ENCODE measurements at regions of chr10 and their contacts with region 1.

Region 1: DNA sequence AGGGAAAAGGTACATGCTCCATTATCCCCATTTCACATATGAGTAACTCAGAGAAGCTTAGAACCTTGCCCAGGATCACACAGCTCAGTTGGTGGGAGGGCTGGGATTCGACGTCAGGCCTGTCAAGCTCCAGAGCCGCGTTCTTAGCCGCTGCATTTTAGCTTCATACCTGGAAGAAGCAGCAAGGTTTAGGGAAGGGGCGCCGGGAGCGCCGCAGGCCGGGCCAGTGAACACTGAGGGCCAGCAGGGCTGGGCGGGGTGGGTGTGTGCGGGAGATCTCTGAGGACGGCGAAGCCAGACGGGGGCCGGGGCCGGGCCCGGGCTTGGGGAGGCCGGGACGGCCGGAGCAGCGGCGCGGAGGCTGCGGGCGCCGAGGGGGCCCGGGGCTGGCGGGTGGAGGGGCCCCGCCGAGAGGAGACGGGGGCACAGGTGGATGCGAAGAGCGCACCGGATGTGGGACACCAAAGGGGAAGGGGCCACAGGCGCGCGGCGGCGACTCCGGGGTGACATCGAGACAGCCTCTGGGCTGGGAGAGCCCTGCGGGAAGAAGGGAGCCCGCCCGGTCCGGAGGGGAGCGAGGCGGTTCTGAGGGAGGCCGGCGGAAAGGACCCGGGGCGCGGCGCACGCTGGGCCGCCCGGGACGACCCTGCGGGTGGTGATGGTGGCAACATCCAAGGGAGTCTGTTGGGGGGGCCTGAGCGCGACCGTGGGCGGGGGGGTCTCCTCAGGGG is 498 bp downstream of the NDST2 start:
- H3K4me3 ChIP-seq: peak overlapping the region; percentile 78
- H3K27ac ChIP-seq: peak overlapping the region; percentile 73
- H3K4me1 ChIP-seq: no peaks in the 10 kb centered on the region
- CTCF ChIP-seq: no peak

Region 2: GRCh38 chr10:73798927-73799563 is 11.9 kb before region 1 on chr10:
- CTCF ChIA-PET with region 1: interaction called, 5 read pairs
- POLR2A ChIA-PET with region 1: interaction called, 15 read pairs
- H3K4me3 ChIP-seq: no peak overlapping the region
- H3K27ac ChIP-seq: no peak overlapping the region
- H3K4me1 ChIP-seq: no peaks in the 10 kb centered on the region
- CTCF ChIP-seq: no peak